ENCODE measurements at regions of chr16 and their contacts with region 1.

Region 1: DNA sequence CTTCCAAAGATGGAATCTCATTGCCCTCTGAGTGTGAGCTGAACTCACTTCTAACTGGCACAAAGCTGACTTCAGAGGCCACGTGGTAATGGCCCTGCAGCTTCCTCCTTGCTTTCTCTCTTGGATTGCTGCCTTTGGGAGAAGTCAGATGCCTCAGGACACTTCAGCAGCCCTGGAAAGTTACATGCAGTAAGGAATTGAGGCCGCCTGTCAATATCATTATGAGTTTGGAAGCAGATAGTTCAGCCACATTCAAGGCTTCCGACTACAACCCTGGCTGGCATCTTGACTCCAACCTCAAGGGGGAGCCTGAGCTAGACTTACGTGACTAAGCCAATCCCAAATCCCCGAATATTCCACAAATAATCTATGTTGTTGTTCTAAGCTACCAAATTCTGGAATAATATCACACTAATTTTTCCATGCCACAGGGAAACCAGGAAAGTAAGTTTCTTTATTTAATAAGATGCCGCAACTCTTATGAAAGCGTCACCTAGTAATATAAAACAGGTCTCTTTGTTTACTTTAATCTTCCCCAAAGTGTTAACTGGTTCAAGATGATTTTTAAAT is 13.6 kb downstream of the CEP20 start:
- DNase-seq: peak; percentile 51
- ATAC-seq: peak; percentile 77 to 78

Region 2: DNA sequence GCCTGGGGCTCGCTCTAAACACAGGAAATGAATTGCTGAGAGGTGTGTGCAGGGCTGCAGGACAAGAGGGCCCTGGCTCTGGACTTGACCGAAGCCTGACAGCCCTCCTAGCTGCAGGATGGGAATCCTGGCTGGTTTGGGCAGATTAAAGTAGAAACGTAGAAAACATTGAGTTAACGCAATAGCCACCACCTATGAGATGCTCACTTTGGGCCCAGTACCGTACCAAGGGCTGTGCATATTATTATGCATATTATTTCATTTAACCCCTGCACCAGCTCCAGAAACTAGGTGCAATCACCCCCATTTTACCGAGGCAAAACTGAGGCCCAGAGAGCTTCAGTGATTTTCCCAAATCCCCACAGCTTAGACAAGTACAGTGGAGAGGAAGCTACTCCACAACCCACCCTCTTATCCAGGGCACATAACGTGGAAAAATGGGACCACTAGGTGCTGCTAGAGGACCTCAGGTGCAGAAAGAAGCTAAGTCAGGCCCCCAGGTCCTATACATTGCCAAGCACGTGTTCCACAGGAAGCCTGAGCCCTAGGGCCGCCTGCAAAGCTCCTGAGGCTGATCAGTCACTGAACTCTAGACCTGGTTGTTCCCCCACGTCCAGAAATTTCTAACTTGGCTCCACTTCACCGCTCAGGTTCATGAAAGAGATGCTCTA is 97.2 kb before region 1 on chr16:
- intact Hi-C with region 1: no loop called
- DNase-seq: no peak
- ATAC-seq: peak in 1 of 2 donors; percentile 29

Region 3: DNA sequence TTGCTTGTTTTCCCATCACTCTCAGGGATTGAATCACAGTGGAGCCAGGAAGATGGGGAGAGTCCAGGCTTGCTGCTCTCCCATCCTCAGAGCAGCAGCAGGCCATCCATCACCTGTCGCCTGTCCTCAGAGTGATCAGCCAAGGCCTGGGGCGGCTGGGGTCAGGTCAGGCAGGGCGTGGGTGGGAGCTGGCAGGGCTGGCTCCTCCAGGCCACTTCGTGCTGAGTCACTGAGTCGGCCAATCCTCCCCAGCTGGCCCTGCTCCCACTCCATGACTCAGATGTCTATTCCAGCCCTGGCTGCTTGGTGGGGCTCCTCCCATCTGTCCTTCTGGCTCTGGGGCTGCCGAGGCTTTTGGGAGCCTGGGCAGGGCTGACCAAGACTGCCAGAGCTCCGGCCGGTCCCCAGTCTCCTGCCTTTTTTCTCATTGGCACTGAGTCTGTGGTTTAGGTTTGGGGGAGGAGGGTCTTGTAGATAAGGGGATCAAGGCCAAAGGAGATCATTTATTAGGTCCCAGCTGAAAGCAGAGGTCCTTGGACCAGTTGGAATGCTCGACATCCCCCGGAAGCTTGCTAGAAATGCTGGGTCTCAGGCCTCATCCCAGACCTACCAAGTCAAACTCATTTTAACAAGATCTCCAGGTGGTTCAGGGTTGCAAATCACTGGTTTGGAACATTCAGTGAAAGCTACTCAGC is 147.3 kb after region 1 on chr16:
- intact Hi-C with region 1: loop called in 1 of 2 experiments (anchors 10 kb)
- DNase-seq: peak; percentile 98
- ATAC-seq: peak; percentile 97 to 99

Region 4: DNA sequence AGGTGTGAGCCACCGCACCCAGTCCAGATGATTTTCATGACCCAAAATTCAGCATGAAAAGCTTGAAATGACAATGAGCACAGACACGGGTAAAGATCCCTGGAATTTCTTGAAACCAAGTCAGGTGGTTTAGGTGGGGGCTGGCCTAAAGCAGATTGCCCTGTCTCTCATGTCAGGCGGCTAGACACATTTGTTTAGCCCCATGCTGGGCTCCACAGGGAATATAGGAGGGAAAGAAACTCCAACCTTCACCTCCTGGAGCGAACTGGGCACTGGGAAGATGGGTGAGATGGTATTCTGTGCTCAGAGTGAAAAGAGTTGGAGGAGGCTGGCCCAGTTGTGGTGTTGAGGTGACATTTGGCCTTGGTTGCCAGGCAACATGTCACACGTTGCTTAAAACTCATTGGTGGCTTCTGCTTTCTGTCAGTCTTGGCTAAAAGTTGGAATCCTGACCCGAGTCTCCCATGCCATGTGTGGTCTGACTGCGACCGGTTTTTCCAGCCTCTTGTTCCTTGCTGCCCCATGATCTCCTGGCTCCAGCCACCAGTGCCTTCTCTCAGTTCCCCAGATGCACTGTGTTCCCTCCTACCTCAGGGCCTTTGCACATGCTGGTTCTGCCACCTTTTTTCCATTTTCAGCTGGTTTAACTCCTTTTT is 234.8 kb after region 1 on chr16:
- intact Hi-C with region 1: loop called in 1 of 2 experiments (anchors 5 kb)
- DNase-seq: no peak
- ATAC-seq: no peak

Region 5: GRCh38 chr16:16191493-16192167 is 316.8 kb after region 1 on chr16:
- intact Hi-C with region 1: loop called in 1 of 2 experiments (anchors 10 kb)
- DNase-seq: no peak
- ATAC-seq: no peak

Measured in left cardiac atrium (tissue), 4 donors.